CD4-positive, alpha-beta T cell (primary cell): ENCODE measurements at regions of chr6 and their contacts with region 1.

Region 1: GRCh38 chr6:87154993-87155841 is at the start of gene ZNF292:
- DNase-seq: peak; percentile 87 to 98 (median 92)
- ATAC-seq: peak; percentile 71
- H3K4me3 ChIP-seq: peak within 1 kb of the TSS; percentile 86
- H3K4me3 Mint-ChIP-seq: peak within 1 kb of the TSS; percentile 92
- H3K27ac ChIP-seq: peak within 1 kb of the TSS; percentile 95 to 96
- H3K27ac Mint-ChIP-seq: peak within 1 kb of the TSS; percentile 88
- H3K4me1 ChIP-seq: peaks cover 50% of the 10 kb centered on the region
- H3K4me1 Mint-ChIP-seq: peaks cover 62% of the 10 kb centered on the region
- H3K27me3 ChIP-seq: no peaks in the 10 kb centered on the region
- H3K27me3 Mint-ChIP-seq: no peaks in the 10 kb centered on the region
- CTCF ChIP-seq: no peak
- total RNA-seq, gene ZNF292: 81.5 to 82.5 TPM

Region 2: DNA sequence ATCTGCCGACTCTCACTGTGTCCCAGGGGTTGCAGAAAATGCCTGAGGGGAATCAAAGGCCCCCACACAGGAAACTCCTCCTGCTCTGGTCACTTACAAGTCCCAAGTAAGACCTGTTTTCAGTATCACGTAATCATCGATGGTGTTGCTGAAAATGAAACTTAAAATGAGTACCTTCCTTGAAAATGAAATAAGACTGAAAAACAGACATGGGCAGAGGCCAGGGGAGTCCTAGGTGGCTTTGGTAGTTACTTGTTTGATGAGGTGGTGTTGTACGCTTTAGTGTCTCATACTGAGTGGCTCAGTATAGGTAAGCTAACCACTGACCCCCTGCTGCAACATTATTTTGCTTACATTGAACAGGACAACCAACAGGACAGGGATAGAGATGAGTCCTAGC is 1469.5 kb before region 1 on chr6:
- CTCF ChIA-PET with region 1: no interaction called
- POLR2A ChIA-PET with region 1: no interaction called
- intact Hi-C with region 1: loop called in 1 of 2 experiments (anchors 10 kb)
- DNase-seq: no peak
- ATAC-seq: no peak
- H3K4me3 ChIP-seq: no peak overlapping the region
- H3K4me3 Mint-ChIP-seq: no peak overlapping the region
- H3K27ac ChIP-seq: no peak overlapping the region
- H3K27ac Mint-ChIP-seq: no peak overlapping the region
- H3K4me1 ChIP-seq: peaks cover 3% of the 10 kb centered on the region
- H3K4me1 Mint-ChIP-seq: no peaks in the 10 kb centered on the region
- H3K27me3 ChIP-seq: no peaks in the 10 kb centered on the region
- H3K27me3 Mint-ChIP-seq: no peaks in the 10 kb centered on the region
- CTCF ChIP-seq: no peak

Region 3: GRCh38 chr6:87183687-87184086 is 28.5 kb after region 1 on chr6:
- CTCF ChIA-PET with region 1: no interaction called
- POLR2A ChIA-PET with region 1: no interaction called
- intact Hi-C with region 1: no loop called
- DNase-seq: no peak
- ATAC-seq: no peak
- H3K4me3 ChIP-seq: no peak overlapping the region
- H3K4me3 Mint-ChIP-seq: no peak overlapping the region
- H3K27ac ChIP-seq: no peak overlapping the region
- H3K27ac Mint-ChIP-seq: no peak overlapping the region
- H3K4me1 ChIP-seq: peaks cover 22% of the 10 kb centered on the region
- H3K4me1 Mint-ChIP-seq: peaks cover 77% of the 10 kb centered on the region
- H3K27me3 ChIP-seq: no peaks in the 10 kb centered on the region
- H3K27me3 Mint-ChIP-seq: no peaks in the 10 kb centered on the region
- CTCF ChIP-seq: no peak

Region 4: DNA sequence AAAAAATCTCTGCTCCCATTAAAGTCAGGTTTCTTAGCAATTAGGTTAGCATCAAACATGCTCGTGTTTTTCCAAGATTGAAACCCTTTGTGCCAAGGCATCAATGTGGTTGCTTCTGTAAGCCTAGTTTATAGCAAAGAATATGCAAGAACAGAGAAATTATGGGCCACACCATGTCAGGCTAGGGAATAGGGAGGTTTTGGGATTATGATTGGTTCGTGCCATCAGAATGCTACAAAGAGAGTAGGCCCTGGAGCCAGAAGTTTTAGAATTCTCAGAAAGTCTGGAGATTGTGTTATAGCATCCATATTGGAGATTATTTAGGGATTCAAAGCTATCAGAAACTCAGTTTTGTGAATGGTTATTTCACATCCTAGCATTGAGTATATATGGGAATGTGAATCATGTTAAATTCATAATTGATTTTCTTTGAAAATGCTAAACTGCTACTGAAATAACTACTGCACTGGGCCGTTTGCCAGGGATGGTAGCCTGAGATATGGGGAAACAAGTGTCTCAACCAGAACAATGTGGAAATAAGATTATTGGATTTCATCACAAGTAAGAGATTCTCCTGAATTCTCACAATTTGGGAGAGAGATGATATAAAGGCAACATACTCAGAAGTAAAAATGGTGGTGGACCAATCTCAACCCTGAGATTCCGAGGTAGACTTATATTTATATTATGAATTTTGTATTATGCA is 45.4 kb after region 1 on chr6:
- CTCF ChIA-PET with region 1: no interaction called
- POLR2A ChIA-PET with region 1: no interaction called
- intact Hi-C with region 1: loop called in 1 of 2 experiments (anchors 5 kb)
- DNase-seq: no peak
- ATAC-seq: no peak
- H3K4me3 ChIP-seq: no peak overlapping the region
- H3K4me3 Mint-ChIP-seq: no peak overlapping the region
- H3K27ac ChIP-seq: no peak overlapping the region
- H3K27ac Mint-ChIP-seq: no peak overlapping the region
- H3K4me1 ChIP-seq: peaks cover 6% of the 10 kb centered on the region
- H3K4me1 Mint-ChIP-seq: peaks cover 71% of the 10 kb centered on the region
- H3K27me3 ChIP-seq: no peaks in the 10 kb centered on the region
- H3K27me3 Mint-ChIP-seq: no peaks in the 10 kb centered on the region
- CTCF ChIP-seq: no peak

Region 5: GRCh38 chr6:87322304-87323212 is 167.3 kb after region 1 on chr6 and contains the start of gene SMIM8:
- CTCF ChIA-PET with region 1: no interaction called
- POLR2A ChIA-PET with region 1: no interaction called
- intact Hi-C with region 1: loop called in 1 of 2 experiments (anchors 5 kb)
- DNase-seq: peak; percentile 75 to 89 (median 82)
- ATAC-seq: peak; percentile 98
- H3K4me3 ChIP-seq: peak within 1 kb of the TSS; percentile 73
- H3K4me3 Mint-ChIP-seq: peak within 1 kb of the TSS; percentile 92
- H3K27ac ChIP-seq: peak within 1 kb of the TSS; percentile 14 to 52
- H3K27ac Mint-ChIP-seq: peak within 1 kb of the TSS; percentile 67
- H3K4me1 ChIP-seq: peaks cover 9% of the 10 kb centered on the region
- H3K4me1 Mint-ChIP-seq: peaks cover 21% of the 10 kb centered on the region
- H3K27me3 ChIP-seq: no peaks in the 10 kb centered on the region
- H3K27me3 Mint-ChIP-seq: no peaks in the 10 kb centered on the region
- CTCF ChIP-seq: peak; percentile 97
- total RNA-seq, gene SMIM8: 5.4 TPM

Region 6: GRCh38 chr6:87407901-87408720 is 252.9 kb after region 1 on chr6 and contains the start of gene CFAP206:
- CTCF ChIA-PET with region 1: no interaction called
- POLR2A ChIA-PET with region 1: interaction called, 3 read pairs
- intact Hi-C with region 1: loop called in 1 of 2 experiments (anchors 10 kb)
- DNase-seq: peak; percentile 63 to 93 (median 77)
- ATAC-seq: peak; percentile 79
- H3K4me3 ChIP-seq: peak within 1 kb of the TSS; percentile 92
- H3K4me3 Mint-ChIP-seq: peak within 1 kb of the TSS; percentile 92
- H3K27ac ChIP-seq: peak within 1 kb of the TSS; percentile 58 to 59
- H3K27ac Mint-ChIP-seq: peak within 1 kb of the TSS; percentile 64
- H3K4me1 ChIP-seq: peaks cover 3% of the 10 kb centered on the region
- H3K4me1 Mint-ChIP-seq: peaks cover 7% of the 10 kb centered on the region
- H3K27me3 ChIP-seq: peaks cover 0 to 3% of the 10 kb centered on the region in 2 experiments
- H3K27me3 Mint-ChIP-seq: peaks cover 30% of the 10 kb centered on the region
- CTCF ChIP-seq: no peak
- total RNA-seq, gene CFAP206: 0.11 TPM in 1 of 2 experiments, not detected in the other

Region 7: GRCh38 chr6:87504441-87504840 is 349.2 kb after region 1 on chr6:
- CTCF ChIA-PET with region 1: no interaction called
- POLR2A ChIA-PET with region 1: no interaction called
- intact Hi-C with region 1: no loop called
- DNase-seq: no peak
- ATAC-seq: no peak
- H3K4me3 ChIP-seq: no peak overlapping the region
- H3K4me3 Mint-ChIP-seq: no peak overlapping the region
- H3K27ac ChIP-seq: no peak overlapping the region
- H3K27ac Mint-ChIP-seq: peak overlapping the region; percentile 45
- H3K4me1 ChIP-seq: no peaks in the 10 kb centered on the region
- H3K4me1 Mint-ChIP-seq: peaks cover 5% of the 10 kb centered on the region
- H3K27me3 ChIP-seq: no peaks in the 10 kb centered on the region
- H3K27me3 Mint-ChIP-seq: no peaks in the 10 kb centered on the region
- CTCF ChIP-seq: no peak

Region 8: DNA sequence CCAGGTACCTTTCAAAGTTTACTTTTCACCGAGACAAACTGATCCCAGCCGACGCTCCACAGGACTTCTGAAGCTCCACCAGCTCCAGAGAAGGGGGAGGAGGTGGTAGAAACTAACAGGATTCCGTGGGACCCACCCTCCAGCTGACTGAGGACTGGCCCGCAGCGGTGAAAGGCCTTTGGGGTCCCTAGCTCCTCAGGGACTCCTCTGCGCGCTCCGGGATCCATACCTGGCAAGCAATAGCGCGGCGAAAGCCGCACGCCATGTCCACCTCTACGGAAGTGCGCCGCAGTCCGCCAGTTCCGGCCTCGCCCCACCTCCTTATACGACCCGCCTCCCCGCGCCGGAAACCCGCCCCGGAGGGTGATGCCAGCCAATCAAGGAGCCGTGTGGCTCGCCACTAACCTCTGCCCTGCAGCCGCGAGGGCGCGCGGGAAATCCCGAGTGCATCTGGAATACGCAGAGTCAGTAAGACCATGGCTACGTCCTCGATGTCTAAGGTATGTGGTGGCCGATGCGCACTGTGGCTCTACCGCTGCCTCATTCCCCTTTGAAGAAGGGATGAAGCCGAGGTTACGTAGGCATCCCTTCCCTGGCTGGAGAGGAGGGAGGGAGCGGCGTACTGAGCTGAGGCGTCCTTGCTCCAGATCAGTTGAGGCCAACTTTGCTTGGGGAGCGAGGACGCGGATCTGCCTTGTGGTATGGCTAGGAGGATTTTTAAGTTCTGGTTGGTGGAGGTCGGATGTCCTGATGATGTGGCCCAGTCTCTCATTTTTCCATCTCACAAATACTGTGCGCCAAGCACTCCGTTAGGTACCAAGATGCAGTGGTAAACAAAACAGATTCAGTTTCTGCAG is 434.7 kb after region 1 on chr6 and contains the starts of genes ORC3 and RARS2:
- CTCF ChIA-PET with region 1: no interaction called
- POLR2A ChIA-PET with region 1: interaction called, 3 read pairs
- intact Hi-C with region 1: loop called in 1 of 2 experiments (anchors 5 kb)
- DNase-seq: peak; percentile 88 to 96 (median 92)
- ATAC-seq: peak; percentile 98
- H3K4me3 ChIP-seq: peak within 1 kb of the TSS; percentile 68
- H3K4me3 Mint-ChIP-seq: peak within 1 kb of the TSS; percentile 89
- H3K27ac ChIP-seq: peak within 1 kb of the TSS; percentile 76 to 80
- H3K27ac Mint-ChIP-seq: peak within 1 kb of the TSS; percentile 87
- H3K4me1 ChIP-seq: peaks cover 37% of the 10 kb centered on the region
- H3K4me1 Mint-ChIP-seq: peaks cover 74% of the 10 kb centered on the region
- H3K27me3 ChIP-seq: no peaks in the 10 kb centered on the region
- H3K27me3 Mint-ChIP-seq: no peaks in the 10 kb centered on the region
- CTCF ChIP-seq: no peak
- total RNA-seq, gene ORC3: 12.1 to 12.9 TPM
- total RNA-seq, gene RARS2: 21.9 to 22.4 TPM

Region 9: DNA sequence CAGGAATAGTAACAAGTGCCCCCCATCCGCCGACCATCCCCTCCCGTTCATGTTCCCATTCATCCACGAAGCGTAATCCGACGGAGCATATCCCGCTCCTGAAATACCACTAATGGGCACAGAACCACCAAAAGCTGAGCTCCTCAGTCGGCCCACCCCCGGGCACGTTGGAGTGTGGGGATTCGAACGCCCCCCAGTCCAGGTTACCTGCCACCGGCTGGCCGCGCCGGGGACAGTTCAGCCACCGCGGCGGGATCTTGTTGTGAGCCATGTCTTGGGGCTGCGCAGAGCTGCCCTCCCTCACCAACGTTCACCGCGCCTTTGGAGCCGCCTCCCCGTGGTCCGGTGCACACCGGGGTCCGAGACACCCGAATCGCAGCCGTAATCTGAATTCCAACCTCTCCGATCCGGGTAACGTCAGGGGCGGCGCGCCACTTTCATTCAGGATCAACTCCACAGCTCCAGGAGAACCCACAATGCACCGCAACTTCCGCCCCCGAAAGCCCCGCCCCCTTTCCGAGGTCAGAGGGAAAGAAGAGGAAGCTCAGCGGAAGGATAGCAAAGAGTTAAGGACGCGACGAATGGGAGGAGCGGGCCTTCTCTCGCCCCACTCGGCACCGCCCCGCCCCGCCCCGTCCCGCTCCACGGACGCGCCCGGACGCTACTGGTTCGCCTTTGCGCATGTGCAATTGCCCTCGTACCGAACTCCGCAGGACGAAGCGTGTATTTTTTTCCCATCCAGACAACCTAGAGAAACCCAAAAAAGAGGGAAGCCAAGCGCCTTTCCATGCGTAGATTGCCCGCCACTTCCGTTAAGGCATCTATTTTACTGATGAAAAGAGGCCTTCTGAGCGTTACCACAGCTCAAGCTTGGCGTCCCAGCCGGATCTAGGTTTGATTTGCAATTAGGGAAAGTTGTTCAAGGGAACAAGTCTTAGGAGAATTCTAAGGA is 1808.2 kb after region 1 on chr6 and contains the start of gene RNGTT:
- CTCF ChIA-PET with region 1: no interaction called
- POLR2A ChIA-PET with region 1: no interaction called
- intact Hi-C with region 1: loop called in 1 of 2 experiments (anchors 5 kb)
- DNase-seq: peak; percentile 94 to 99 (median 97)
- ATAC-seq: peak; percentile 98
- H3K4me3 ChIP-seq: peak within 1 kb of the TSS; percentile 88
- H3K4me3 Mint-ChIP-seq: peak within 1 kb of the TSS; percentile 96
- H3K27ac ChIP-seq: peak within 1 kb of the TSS; percentile 60 to 65
- H3K27ac Mint-ChIP-seq: peak within 1 kb of the TSS; percentile 82
- H3K4me1 ChIP-seq: peaks cover 15% of the 10 kb centered on the region
- H3K4me1 Mint-ChIP-seq: peaks cover 63% of the 10 kb centered on the region
- H3K27me3 ChIP-seq: no peaks in the 10 kb centered on the region
- H3K27me3 Mint-ChIP-seq: no peaks in the 10 kb centered on the region
- CTCF ChIP-seq: no peak
- total RNA-seq, gene RNGTT: 11.6 to 12.4 TPM